ENCODE measurements at regions of chr13 and their contacts with region 1.

Region 1: GRCh38 chr13:44197791-44198770 is 175.5 kb upstream of the SERP2 start:
- DNase-seq: peak; percentile 65
- ATAC-seq: peak; percentile 91
- H3K4me3 Mint-ChIP-seq: no peak overlapping the region
- H3K27ac Mint-ChIP-seq: no peak overlapping the region
- H3K4me1 Mint-ChIP-seq: peaks cover 40% of the 10 kb centered on the region
- H3K27me3 Mint-ChIP-seq: peaks cover 28% of the 10 kb centered on the region

Region 2: GRCh38 chr13:44141725-44142539 is 56.1 kb before region 1 on chr13:
- CTCF ChIA-PET with region 1: no interaction called
- POLR2A ChIA-PET with region 1: no interaction called
- intact Hi-C with region 1: loop called in 1 of 2 experiments (anchors 5 kb)
- DNase-seq: peak; percentile 96
- ATAC-seq: peak; percentile 100
- H3K4me3 Mint-ChIP-seq: peak overlapping the region; percentile 87
- H3K27ac Mint-ChIP-seq: peak overlapping the region; percentile 90
- H3K4me1 Mint-ChIP-seq: peaks cover 15% of the 10 kb centered on the region
- H3K27me3 Mint-ChIP-seq: peaks cover 4% of the 10 kb centered on the region

Region 3: GRCh38 chr13:44155422-44156293 is 42.4 kb before region 1 on chr13:
- CTCF ChIA-PET with region 1: no interaction called
- POLR2A ChIA-PET with region 1: no interaction called
- intact Hi-C with region 1: no loop called
- DNase-seq: no peak
- ATAC-seq: no peak
- H3K4me3 Mint-ChIP-seq: no peak overlapping the region
- H3K27ac Mint-ChIP-seq: no peak overlapping the region
- H3K4me1 Mint-ChIP-seq: no peaks in the 10 kb centered on the region
- H3K27me3 Mint-ChIP-seq: peaks cover 2% of the 10 kb centered on the region

Region 4: GRCh38 chr13:44259045-44260027 is 61.3 kb after region 1 on chr13:
- CTCF ChIA-PET with region 1: interaction called, 3 read pairs
- POLR2A ChIA-PET with region 1: no interaction called
- intact Hi-C with region 1: loop called (anchors 1 kb)
- DNase-seq: peak; percentile 90
- ATAC-seq: peak; percentile 87
- H3K4me3 Mint-ChIP-seq: peak overlapping the region; percentile 62
- H3K27ac Mint-ChIP-seq: peak overlapping the region; percentile 94
- H3K4me1 Mint-ChIP-seq: peaks cover 21% of the 10 kb centered on the region
- H3K27me3 Mint-ChIP-seq: peaks cover 5% of the 10 kb centered on the region

Region 5: GRCh38 chr13:44373601-44374348 is 175.7 kb after region 1 on chr13 and contains the start of gene SERP2:
- CTCF ChIA-PET with region 1: no interaction called
- POLR2A ChIA-PET with region 1: no interaction called
- intact Hi-C with region 1: loop called (anchors 1 to 10 kb)
- DNase-seq: peak; percentile 31
- ATAC-seq: peak; percentile 51
- H3K4me3 Mint-ChIP-seq: peak within 1 kb of the TSS; percentile 36
- H3K27ac Mint-ChIP-seq: peak within 1 kb of the TSS; percentile 43
- H3K4me1 Mint-ChIP-seq: peaks cover 10% of the 10 kb centered on the region
- H3K27me3 Mint-ChIP-seq: peaks cover 30% of the 10 kb centered on the region
- total RNA-seq, gene SERP2: 0.63 to 0.98 TPM

Region 6: DNA sequence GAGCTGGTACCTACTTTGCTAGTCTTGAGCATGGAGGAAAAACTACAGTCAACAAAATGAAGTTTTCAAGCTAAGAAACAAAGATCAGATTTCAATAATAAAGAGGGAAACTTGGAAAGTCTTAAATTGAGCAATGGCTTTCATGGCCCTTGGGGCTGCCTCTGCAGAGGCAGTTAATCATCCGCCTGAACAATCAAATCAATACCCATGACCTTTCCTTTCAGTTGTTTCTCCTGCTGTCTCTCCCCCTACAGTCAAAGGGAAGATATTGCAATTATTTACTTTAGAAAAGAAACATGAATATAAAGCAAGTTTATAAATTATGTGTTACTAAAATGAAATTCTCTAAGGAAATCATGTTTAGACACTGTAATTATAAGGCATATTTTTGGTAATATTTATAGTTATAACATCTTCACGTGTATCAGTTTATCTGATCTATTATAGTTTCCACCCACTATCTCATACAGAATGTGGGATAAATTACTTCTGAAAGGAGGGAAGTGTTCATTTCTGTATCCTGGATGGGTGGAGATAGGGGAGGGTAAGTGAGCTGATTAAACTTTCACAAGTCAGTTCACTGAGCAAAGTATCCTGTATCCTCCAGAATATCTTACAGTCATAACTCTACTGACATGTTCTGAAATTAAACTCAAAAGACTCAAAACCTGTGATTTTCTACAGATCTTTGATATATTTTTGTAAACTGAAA is 450.5 kb after region 1 on chr13:
- CTCF ChIA-PET with region 1: no interaction called
- POLR2A ChIA-PET with region 1: no interaction called
- intact Hi-C with region 1: loop called (anchors 5 kb)
- DNase-seq: peak; percentile 25
- ATAC-seq: peak; percentile 85
- H3K4me3 Mint-ChIP-seq: no peak overlapping the region
- H3K27ac Mint-ChIP-seq: peak overlapping the region; percentile 37
- H3K4me1 Mint-ChIP-seq: peaks cover 23% of the 10 kb centered on the region
- H3K27me3 Mint-ChIP-seq: peaks cover 26% of the 10 kb centered on the region

Region 7: DNA sequence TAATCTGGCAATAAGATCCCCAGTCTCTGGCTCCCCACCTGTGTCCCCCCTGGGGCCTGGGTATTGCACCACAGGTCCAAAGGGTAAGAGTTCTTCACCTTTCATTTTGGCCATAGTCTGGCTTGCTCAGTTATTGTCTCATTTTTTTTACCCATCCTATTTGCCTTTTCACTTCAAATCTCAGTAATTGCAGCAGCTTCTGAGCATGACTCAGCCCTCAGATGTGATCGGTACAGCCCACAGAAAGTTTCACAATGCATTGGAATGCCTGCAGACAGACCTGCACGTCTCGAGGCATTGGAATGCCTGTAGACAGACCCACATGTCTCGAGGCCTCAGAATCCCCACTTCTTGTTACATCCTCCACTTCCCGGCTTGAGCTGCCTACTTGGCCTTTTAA is 617.5 kb after region 1 on chr13:
- CTCF ChIA-PET with region 1: no interaction called
- POLR2A ChIA-PET with region 1: no interaction called
- intact Hi-C with region 1: loop called in 1 of 2 experiments (anchors 5 kb)
- DNase-seq: peak; percentile 70
- ATAC-seq: peak; percentile 85
- H3K4me3 Mint-ChIP-seq: no peak overlapping the region
- H3K27ac Mint-ChIP-seq: no peak overlapping the region
- H3K4me1 Mint-ChIP-seq: peaks cover 32% of the 10 kb centered on the region
- H3K27me3 Mint-ChIP-seq: peaks cover 22% of the 10 kb centered on the region